IMR-90 (cell line): ENCODE measurements at regions of chr17 and their contacts with region 1.

Region 1: DNA sequence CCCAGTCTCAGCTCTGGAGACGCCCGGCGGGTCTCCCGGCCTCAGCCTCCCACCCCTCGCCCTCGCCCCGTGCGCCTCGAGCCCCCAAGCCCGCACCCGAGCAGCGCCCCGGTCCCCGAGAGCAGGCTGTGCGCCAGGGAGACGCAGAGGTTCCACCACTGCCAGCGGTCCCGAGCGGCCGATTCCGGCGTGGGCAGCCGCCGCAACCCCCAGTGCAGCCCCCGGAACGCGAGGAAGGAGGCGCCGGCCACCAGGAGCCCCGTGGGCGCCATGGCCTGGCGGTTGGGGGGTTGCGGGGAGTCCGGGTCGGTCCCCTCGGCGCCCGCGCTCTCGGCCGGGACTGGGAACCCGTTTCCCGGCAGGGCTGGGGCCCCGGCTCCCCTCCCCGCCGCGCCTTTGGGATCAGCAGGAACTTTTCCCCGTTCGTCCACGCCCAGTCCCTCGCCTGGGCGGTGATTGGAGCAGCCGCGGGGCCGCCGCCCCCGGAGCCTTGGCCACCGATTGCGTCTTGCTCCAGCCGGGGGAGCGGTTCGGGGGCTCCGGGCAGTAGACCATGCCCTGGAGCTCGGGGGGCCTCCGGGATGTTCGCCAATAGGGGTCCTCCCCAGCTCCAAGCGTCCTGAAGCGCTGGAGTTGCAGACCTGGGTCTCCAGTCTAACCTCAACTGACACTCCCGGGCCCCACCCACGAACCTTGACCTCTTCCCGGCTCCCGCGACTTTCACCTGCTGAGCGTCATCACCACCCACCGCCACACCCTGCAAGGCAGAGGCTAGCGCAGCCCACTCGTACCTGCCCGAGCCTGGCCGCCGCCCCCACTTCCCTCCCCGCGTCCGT is at the start of gene TLCD2:
- DNase-seq: peak; percentile 65
- ATAC-seq: peak; percentile 55
- H3K4me3 ChIP-seq: peak within 1 kb of the TSS; percentile 69
- H3K27ac ChIP-seq: peak within 1 kb of the TSS; percentile 53
- H3K4me1 ChIP-seq: peaks cover 27% of the 10 kb centered on the region
- H3K27me3 ChIP-seq: no peaks in the 10 kb centered on the region
- CTCF ChIP-seq: no peak
- POLR2A ChIP-seq: peak; percentile 84
- RAD21 ChIP-seq: no peak
- total RNA-seq, gene TLCD2: 0.72 and 0.83 TPM in 2 replicates

Region 2: GRCh38 chr17:1546292-1546922 is 163.8 kb before region 1 on chr17:
- CTCF ChIA-PET with region 1: no interaction called
- POLR2A ChIA-PET with region 1: no interaction called
- dilution Hi-C with region 1: no loop called
- in situ Hi-C with region 1: no loop called
- intact Hi-C with region 1: no loop called
- DNase-seq: no peak
- ATAC-seq: no peak; the same call in 1 of the 2 replicates
- H3K4me3 ChIP-seq: no peak overlapping the region
- H3K27ac ChIP-seq: no peak overlapping the region
- H3K4me1 ChIP-seq: no peaks in the 10 kb centered on the region
- H3K27me3 ChIP-seq: no peaks in the 10 kb centered on the region
- CTCF ChIP-seq: no peak
- POLR2A ChIP-seq: no peak
- RAD21 ChIP-seq: no peak

Region 3: DNA sequence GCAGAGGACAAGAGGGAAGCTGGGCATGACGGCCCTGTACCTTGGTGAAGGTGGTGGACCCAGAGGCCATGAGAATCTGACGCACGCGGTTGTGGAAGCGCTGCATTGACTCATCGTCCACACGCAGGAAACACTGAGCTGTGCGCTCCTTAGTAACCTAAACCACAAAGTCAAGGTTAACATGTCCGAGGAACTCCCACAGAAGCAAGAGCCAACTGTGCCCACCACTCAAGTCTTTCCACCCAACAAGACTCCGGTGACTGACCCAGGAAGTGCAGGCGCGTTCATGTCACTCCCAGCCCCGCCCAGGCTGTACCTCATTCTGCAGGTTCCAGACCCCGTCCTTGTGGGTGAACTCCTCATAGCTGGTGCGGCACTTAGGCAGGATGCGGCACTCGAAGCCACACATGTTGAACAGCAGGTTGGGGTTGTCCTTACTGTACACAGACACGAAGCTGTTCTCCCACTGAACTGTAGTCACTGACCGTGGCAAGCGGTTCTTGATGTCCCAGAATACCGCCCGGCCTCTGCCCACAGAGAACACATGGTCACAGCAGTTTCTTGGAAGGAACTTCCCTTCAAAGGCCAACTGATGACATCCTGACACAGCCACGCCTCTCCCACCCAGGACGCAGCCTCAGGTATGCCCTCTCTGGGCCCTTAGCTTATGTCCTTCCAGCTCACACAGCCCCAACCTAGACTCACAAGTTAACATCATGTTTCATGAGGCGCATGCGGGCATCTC is 37.0 kb before region 1 on chr17:
- CTCF ChIA-PET with region 1: interaction called, 5 read pairs
- POLR2A ChIA-PET with region 1: no interaction called
- dilution Hi-C with region 1: no loop called
- in situ Hi-C with region 1: no loop called
- intact Hi-C with region 1: loop called (anchors 1 kb)
- DNase-seq: no peak
- ATAC-seq: no peak
- H3K4me3 ChIP-seq: no peak overlapping the region
- H3K27ac ChIP-seq: no peak overlapping the region; the same call in 1 of the 2 replicates
- H3K4me1 ChIP-seq: peaks cover 3% of the 10 kb centered on the region; the same call in 1 of the 2 replicates
- H3K27me3 ChIP-seq: no peaks in the 10 kb centered on the region
- CTCF ChIP-seq: no peak
- POLR2A ChIP-seq: no peak
- RAD21 ChIP-seq: no peak

Region 4: DNA sequence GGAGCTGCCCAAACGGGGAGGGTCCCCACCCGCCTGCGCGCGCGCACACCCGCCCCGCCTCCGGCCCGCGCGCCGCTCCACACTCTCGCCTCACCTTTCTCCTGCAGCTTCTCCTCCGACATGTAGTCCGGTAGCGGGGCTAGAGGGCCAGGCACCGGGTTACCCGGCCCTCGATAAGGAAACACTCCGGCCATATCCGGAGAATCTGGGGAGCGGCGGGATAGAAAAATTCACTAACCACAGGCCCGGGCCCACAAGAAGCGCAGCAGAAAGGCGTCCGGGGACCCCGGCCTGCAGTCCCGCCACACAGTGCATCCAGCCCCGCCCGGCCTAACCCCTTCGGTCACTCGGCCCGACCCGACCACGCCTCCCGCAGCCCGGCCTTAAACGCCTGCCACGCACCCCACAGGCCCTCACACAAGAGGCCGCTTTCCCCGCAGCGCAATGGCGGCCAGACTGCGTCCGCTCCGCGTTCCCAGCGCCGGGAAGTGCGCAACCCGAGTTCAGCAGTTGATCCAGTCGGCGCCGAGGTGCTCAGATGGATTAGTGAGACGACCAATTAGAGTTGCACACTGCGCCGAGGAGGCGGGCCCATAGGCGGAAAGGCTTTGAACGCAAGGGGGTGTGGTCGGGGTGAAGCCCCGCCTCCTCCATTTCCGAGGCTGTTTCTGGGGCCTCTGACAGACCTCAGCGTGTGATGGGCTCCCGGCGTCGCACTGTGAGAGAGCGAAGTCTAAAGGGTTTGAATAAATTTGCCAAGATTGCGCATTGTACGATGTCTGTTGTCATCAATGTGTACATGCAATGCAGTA is 25.6 kb before region 1 on chr17 and contains the start of gene PRPF8:
- CTCF ChIA-PET with region 1: no interaction called
- POLR2A ChIA-PET with region 1: interaction called, 20 read pairs
- dilution Hi-C with region 1: no loop called
- in situ Hi-C with region 1: no loop called
- intact Hi-C with region 1: loop called (anchors 2 kb)
- DNase-seq: peak; percentile 96
- ATAC-seq: peak; percentile 99
- H3K4me3 ChIP-seq: peak within 1 kb of the TSS; percentile 61
- H3K27ac ChIP-seq: peak within 1 kb of the TSS; percentile 85
- H3K4me1 ChIP-seq: peaks cover 3% of the 10 kb centered on the region
- H3K27me3 ChIP-seq: no peaks in the 10 kb centered on the region
- CTCF ChIP-seq: no peak
- POLR2A ChIP-seq: peak; percentile 82
- RAD21 ChIP-seq: no peak
- total RNA-seq, gene PRPF8: 113 and 141 TPM in 2 replicates